CD4-positive, alpha-beta T cell (primary cell): ENCODE measurements at regions of chr9 and their contacts with region 1.

Region 1: DNA sequence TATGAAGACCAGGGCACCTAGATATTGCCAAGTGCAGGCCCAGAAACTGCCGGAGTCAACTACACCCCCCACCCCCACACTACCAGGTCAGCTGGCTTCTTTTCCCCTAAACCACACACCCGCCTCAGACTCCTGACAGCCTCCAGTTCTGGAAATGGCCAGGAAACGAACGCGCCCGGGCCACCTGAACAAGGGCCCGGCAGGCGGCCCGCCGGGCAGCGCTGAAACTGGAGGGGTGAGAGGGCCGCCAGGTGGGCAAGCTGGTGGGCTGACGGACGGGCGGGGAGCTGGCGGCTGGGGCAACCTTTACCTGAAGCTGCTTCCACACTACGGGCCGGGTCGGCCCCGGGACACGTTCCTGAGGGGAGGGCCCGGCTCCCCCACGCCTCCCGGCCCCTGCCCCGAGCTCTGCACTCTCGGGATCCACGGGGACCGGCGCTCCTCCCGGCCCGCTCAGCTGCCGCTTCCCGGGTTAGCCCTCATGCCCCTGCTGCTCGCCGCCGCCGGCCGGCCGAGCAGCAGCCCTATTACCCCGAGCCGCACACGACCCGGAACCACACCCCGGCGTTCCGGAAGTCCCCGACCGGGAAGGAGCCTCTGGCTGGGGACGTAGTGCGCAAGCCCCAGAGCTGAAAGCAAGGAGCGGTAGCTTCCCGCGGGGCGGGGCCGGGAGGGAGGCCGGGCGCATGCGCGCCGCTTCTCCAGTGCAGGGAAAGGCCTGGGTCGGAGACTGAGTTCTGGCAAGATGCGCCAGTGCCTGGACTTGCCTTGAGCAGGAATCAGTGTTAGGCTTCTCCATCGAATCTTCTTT is at the start of gene MAPKAP1:
- DNase-seq: peak; percentile 81 to 98 (median 92)
- ATAC-seq: peak; percentile 98
- H3K4me3 ChIP-seq: peak within 1 kb of the TSS; percentile 59
- H3K4me3 Mint-ChIP-seq: peak within 1 kb of the TSS; percentile 89
- H3K27ac ChIP-seq: peak within 1 kb of the TSS; percentile 26 to 67
- H3K27ac Mint-ChIP-seq: peak within 1 kb of the TSS; percentile 89
- H3K4me1 ChIP-seq: peaks cover 28% of the 10 kb centered on the region
- H3K4me1 Mint-ChIP-seq: peaks cover 51% of the 10 kb centered on the region
- H3K27me3 ChIP-seq: no peaks in the 10 kb centered on the region
- H3K27me3 Mint-ChIP-seq: peaks cover 7% of the 10 kb centered on the region
- CTCF ChIP-seq: no peak
- total RNA-seq, gene MAPKAP1: 40.3 to 44.9 TPM

Region 2: DNA sequence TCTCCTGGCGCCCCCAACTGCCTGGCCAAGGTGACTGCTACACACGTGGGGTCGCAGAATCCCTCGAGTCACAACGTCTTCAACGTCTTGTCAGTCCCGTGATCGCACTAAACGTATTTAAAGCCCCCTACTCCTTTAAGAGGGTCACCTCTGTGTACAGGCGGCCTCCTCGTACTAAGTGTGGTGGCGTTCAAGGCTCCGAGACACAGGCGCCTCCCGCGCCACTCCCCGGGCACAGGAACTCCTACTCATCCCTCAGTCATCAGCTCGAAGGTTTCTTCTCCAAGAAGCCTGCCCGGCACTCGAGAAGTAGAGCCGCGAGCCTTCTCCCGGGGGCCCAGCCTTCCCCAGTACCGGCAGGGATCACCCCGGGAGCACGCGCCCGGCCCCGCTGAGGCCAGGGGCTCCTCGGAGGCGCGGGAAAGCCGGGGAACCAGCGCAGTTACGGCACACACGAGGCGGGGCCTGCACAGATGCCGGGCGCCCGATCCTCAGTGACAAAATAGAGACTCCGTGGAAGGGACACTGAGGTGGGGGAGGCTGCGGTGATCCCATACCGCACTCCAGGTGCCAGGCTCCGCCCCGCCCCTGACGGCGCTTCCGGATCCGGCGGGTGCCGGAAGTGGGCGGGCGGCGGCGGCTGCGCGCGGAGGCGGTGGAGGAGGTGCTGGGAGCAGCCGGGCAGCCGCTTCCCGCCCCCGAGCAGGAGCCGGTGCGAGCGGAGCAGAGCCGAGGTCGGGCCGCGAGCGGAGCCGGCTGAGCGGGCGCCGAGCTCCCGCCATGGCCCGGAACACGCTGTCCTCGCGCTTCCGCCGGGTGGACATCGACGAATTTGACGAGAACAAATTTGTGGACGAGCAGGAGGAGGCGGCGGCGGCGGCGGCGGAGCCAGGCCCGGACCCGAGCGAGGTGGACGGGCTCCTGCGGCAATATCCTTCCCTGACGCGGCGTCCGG is 838.1 kb before region 1 on chr9:
- CTCF ChIA-PET with region 1: no interaction called
- POLR2A ChIA-PET with region 1: no interaction called
- intact Hi-C with region 1: loop called in 1 of 2 experiments (anchors 5 kb)
- DNase-seq: peak; percentile 76 to 95 (median 87)
- ATAC-seq: peak; percentile 75
- H3K4me3 ChIP-seq: peak overlapping the region; percentile 84
- H3K4me3 Mint-ChIP-seq: peak overlapping the region; percentile 92
- H3K27ac ChIP-seq: peak overlapping the region; percentile 93 to 96
- H3K27ac Mint-ChIP-seq: peak overlapping the region; percentile 92
- H3K4me1 ChIP-seq: peaks cover 58% of the 10 kb centered on the region
- H3K4me1 Mint-ChIP-seq: peaks cover 56% of the 10 kb centered on the region
- H3K27me3 ChIP-seq: no peaks in the 10 kb centered on the region
- H3K27me3 Mint-ChIP-seq: no peaks in the 10 kb centered on the region
- CTCF ChIP-seq: no peak

Region 3: GRCh38 chr9:125829743-125830142 is 122.9 kb after region 1 on chr9:
- CTCF ChIA-PET with region 1: no interaction called
- POLR2A ChIA-PET with region 1: interaction called, 15 read pairs
- intact Hi-C with region 1: no loop called
- DNase-seq: peak; percentile 24 to 86 (median 50)
- ATAC-seq: peak; percentile 94
- H3K4me3 ChIP-seq: peak overlapping the region; percentile 53
- H3K4me3 Mint-ChIP-seq: peak overlapping the region; percentile 91
- H3K27ac ChIP-seq: peak overlapping the region; percentile 66 to 68
- H3K27ac Mint-ChIP-seq: peak overlapping the region; percentile 99
- H3K4me1 ChIP-seq: peaks cover 10% of the 10 kb centered on the region
- H3K4me1 Mint-ChIP-seq: peaks cover 54% of the 10 kb centered on the region
- H3K27me3 ChIP-seq: no peaks in the 10 kb centered on the region
- H3K27me3 Mint-ChIP-seq: no peaks in the 10 kb centered on the region
- CTCF ChIP-seq: no peak